GM10248 (cell line): ENCODE measurements at regions of chr13 and their contacts with region 1.

Region 1: GRCh38 chr13:95239283-95239682 is 62.0 kb downstream of the ABCC4 start:
- DNase-seq: peak; percentile 58
- CTCF ChIP-seq: no peak

Region 2: DNA sequence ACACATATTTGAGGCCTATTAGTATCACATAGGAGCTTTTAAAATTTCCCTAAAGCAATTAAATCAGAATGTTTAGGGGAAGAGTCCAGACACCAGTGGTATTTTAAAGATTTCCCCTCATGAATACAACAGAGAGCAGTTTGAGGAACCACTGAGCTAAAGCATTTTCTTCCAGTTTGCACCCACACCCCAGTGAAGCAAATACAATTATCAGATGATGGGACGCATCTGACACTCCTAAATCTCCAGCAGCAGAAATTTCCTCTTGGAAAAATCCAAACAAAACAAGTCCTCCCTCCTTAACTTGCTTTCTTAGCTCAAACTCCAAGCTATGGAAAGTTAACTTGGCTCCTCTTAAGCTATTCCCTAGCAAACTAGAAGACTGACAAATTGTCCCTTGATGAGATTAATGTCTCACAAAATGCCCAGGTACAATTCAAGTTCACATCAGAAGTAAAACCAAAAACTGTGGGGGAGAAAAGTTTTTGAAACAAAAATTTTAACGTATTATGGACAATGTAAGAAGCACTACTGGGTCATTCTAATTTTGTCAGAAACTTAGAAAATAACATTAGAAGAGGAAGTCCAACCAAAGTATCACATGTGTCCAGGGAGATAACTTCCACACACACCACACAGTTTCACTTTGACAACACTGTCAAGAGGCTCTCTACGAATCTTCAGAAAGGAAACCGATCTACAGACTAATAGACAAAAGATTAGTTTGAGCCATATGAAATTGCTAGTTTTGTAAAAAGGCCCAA is 12.2 kb before region 1 on chr13:
- CTCF ChIA-PET with region 1: interaction called, 31 read pairs
- POLR2A ChIA-PET with region 1: no interaction called
- DNase-seq: peak; percentile 69
- CTCF ChIP-seq: no peak

Region 3: DNA sequence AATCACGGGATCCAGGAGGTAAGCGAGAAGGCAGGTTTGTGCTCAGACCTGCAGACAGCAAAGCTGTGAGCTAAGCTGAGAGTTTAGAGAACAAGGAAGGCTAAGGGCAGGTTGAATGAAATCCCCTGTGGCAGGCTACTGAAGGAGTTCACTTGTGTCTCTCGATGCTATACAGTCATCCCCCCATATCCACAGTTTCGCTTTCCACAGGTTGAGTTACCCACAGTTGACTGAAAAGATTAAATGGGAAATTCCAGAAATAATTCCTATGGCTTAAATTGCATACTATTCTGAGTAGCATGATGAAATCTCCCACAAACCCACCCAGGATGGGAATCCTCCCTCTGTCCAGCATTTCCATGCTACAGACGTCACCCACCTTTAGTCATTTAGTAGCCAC is 12.4 kb after region 1 on chr13:
- CTCF ChIA-PET with region 1: interaction called, 22 read pairs
- POLR2A ChIA-PET with region 1: no interaction called
- DNase-seq: no peak
- CTCF ChIP-seq: no peak